Gastrocnemius medialis (tissue), 4 donors: ENCODE measurements at regions of chr13 and their contacts with region 1.

Region 1: DNA sequence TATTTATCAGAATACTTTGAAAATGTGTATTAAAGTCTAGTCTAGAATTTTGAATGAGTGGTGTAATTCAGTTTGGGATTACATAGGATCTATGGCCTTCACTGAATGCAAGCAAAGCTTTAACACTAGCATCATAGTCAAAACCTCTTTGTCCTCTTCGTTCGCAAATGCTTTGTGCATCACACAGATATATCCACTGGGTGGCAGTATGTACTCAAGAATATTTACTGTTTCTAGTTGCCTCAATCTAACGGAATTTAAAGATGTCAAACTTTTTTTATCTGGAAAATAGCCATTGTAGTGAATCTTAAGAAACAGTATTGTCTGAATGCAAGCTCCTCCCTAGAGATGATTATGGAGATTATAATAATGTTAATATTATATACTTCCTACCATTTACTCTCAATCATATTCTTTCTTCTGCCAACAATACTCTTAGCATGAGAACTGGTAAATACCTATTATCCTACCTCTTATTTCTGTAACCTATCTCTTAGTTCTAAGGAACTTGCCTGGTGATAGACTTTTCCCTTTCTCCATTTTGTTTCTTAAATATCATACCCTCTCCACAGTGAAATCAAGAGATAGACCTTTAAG is 25.8 kb downstream of the LACC1 start:
- DNase-seq: no peak
- ATAC-seq: peak; percentile 61 to 77
- H3K4me3 ChIP-seq: no peak overlapping the region
- H3K27ac ChIP-seq: no peak overlapping the region
- H3K4me1 ChIP-seq: peaks cover 0 to 4% of the 10 kb centered on the region in 2 donors
- H3K27me3 ChIP-seq: no peaks in the 10 kb centered on the region
- CTCF ChIP-seq: peak; percentile 66 to 84 (median 76)
- POLR2A ChIP-seq: no peak

Region 2: GRCh38 chr13:43852923-43853404 is 52.6 kb before region 1 on chr13:
- in situ Hi-C with region 1: no loop called
- intact Hi-C with region 1: no loop called
- DNase-seq: no peak
- ATAC-seq: no peak
- H3K4me3 ChIP-seq: no peak overlapping the region
- H3K27ac ChIP-seq: no peak overlapping the region
- H3K4me1 ChIP-seq: no peaks in the 10 kb centered on the region
- H3K27me3 ChIP-seq: no peaks in the 10 kb centered on the region
- CTCF ChIP-seq: no peak
- POLR2A ChIP-seq: no peak

Region 3: DNA sequence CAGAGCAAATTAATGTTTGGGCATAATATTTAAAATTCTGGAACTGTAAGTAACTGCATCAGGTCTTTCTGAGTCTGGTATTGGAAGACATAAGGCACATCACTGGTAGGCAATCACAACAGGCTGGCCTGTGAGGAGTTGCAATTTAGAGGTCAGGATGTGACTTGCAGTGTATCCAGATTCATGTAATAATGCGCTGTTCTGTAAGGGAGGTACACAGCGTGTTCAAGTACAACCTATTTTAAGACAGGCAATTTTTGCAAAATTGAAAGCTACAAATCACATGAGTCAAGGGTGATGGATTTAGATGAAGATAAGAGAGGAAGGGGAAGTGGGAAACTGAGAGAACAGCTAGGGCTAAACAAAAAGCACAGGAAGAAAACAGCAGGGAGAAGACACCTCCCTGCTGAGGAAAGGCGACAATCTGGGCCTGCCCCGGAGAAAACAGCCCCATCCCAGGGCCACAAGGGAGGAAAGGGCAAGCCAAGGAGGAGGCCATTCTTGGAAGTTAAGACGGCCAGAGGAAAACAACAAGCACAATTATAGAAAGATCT is 112.3 kb after region 1 on chr13:
- in situ Hi-C with region 1: no loop called
- intact Hi-C with region 1: no loop called
- DNase-seq: no peak
- ATAC-seq: no peak
- H3K4me3 ChIP-seq: no peak overlapping the region
- H3K27ac ChIP-seq: peak overlapping the region in 1 of 4 donors; percentile 6
- H3K4me1 ChIP-seq: peaks cover 17 to 31% of the 10 kb centered on the region in 2 donors
- H3K27me3 ChIP-seq: no peaks in the 10 kb centered on the region
- CTCF ChIP-seq: no peak
- POLR2A ChIP-seq: no peak

Region 4: DNA sequence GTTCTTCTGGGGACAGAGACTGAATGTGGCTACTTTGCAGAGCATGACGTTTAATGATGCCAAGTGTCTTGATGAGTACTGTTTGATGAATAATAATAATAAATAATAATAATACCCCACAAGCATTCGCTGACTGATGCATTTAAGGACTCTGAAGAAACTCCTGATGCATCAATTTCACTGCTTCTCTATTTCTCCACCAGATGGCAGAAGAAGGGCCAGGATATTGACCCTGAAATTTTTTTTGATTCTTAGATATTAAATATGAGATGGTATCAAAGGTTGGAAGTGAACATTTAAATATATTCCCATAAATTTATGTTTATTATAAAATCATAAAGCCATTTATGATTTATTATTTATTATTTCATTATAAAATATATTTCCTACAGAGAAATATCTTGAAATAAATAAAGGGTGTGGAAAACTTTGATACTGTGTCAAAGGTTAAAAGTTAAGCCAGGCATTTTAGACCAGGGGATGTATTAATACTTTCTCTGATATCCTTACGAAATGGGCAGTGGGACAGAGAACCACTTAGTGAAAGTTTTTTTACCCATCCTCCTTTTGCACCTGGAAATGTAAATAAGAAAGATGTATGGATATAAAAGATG is 145.0 kb after region 1 on chr13:
- in situ Hi-C with region 1: loop called in 3 of 4 experiments (anchors 5 to 25 kb)
- intact Hi-C with region 1: loop called (anchors 5 kb)
- DNase-seq: no peak
- ATAC-seq: peak; percentile 58 to 70
- H3K4me3 ChIP-seq: no peak overlapping the region
- H3K27ac ChIP-seq: no peak overlapping the region
- H3K4me1 ChIP-seq: peaks cover 0 to 4% of the 10 kb centered on the region in 2 donors
- H3K27me3 ChIP-seq: no peaks in the 10 kb centered on the region
- CTCF ChIP-seq: peak; percentile 62 to 87 (median 73)
- POLR2A ChIP-seq: no peak

Region 5: GRCh38 chr13:44116562-44117332 is 211.2 kb after region 1 on chr13:
- in situ Hi-C with region 1: no loop called
- intact Hi-C with region 1: loop called (anchors 5 kb)
- DNase-seq: no peak
- ATAC-seq: peak; percentile 72 to 88
- H3K4me3 ChIP-seq: peak overlapping the region in 1 of 4 donors; percentile 12
- H3K27ac ChIP-seq: peak overlapping the region; percentile 37 to 72 (median 66)
- H3K4me1 ChIP-seq: peaks cover 20 to 23% of the 10 kb centered on the region in 2 donors
- H3K27me3 ChIP-seq: no peaks in the 10 kb centered on the region
- CTCF ChIP-seq: peak in 1 of 5 experiments; percentile 25
- POLR2A ChIP-seq: no peak

Region 6: GRCh38 chr13:44435142-44435982 is 529.8 kb after region 1 on chr13:
- in situ Hi-C with region 1: loop called (anchors 5 to 25 kb)
- intact Hi-C with region 1: loop called (anchors 2 kb)
- DNase-seq: peak; percentile 94 to 96
- ATAC-seq: peak; percentile 75 to 78
- H3K4me3 ChIP-seq: peak overlapping the region; percentile 79 to 85 (median 82)
- H3K27ac ChIP-seq: peak overlapping the region; percentile 87 to 95 (median 92)
- H3K4me1 ChIP-seq: peaks cover 28 to 47% of the 10 kb centered on the region in 2 donors
- H3K27me3 ChIP-seq: no peaks in the 10 kb centered on the region
- CTCF ChIP-seq: no peak
- POLR2A ChIP-seq: peak; percentile 76 to 93

Region 7: DNA sequence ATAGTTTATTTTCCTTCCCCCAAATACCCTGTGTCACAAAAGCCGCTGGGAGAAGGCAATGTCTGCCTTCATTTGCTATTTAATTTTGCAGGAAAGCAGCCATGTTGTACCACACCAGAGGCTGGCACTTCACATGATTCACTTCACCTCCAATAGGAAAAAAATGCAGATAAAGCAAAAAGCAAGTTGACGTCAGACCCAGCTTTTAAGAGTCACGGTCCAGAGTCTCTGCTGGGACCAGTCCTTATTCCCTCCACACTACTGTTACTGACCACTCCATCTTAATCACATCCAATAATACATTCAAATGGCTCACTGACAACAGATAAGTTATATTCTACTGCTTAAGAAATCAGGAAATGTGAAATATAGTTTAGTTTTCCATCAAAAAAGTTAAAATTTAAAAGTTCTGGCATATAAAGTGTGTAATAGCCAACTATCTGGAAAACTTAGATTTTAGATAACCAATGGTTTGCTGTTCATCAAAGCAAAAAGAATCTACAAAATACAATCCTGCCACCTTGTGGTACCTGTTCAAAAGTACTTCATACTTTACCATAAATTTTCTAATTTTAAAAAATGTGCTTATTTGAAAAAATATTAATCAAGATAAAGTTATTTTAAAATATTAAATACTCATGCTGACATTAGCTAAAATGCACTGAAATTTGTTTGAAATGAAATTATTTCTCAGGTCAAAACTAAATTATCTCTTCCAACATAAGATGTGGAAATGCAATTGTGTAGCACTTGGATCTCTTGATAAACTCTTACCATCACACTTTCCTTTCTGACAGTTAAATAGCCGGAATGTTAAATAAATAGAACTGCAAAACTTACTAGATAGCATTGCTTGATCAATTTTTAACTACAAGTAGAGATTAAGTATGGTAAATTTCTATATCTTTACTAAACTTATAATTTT is 565.4 kb after region 1 on chr13:
- in situ Hi-C with region 1: loop called in 2 of 4 experiments (anchors 10 kb)
- intact Hi-C with region 1: loop called (anchors 1 kb)
- DNase-seq: no peak
- ATAC-seq: no peak
- H3K4me3 ChIP-seq: no peak overlapping the region
- H3K27ac ChIP-seq: no peak overlapping the region
- H3K4me1 ChIP-seq: peaks cover 48 to 72% of the 10 kb centered on the region in 2 donors
- H3K27me3 ChIP-seq: no peaks in the 10 kb centered on the region
- CTCF ChIP-seq: peak; percentile 43 to 63 (median 55)
- POLR2A ChIP-seq: no peak

Region 8: GRCh38 chr13:44969551-44970484 is 1064.3 kb after region 1 on chr13:
- in situ Hi-C with region 1: loop called (anchors 10 to 25 kb)
- intact Hi-C with region 1: loop called (anchors 5 kb)
- DNase-seq: no peak
- ATAC-seq: peak; percentile 64 to 69
- H3K4me3 ChIP-seq: no peak overlapping the region
- H3K27ac ChIP-seq: peak overlapping the region; percentile 60 to 81 (median 79)
- H3K4me1 ChIP-seq: peaks cover 37 to 51% of the 10 kb centered on the region in 2 donors
- H3K27me3 ChIP-seq: no peaks in the 10 kb centered on the region
- CTCF ChIP-seq: peak; percentile 78 to 92 (median 82)
- POLR2A ChIP-seq: no peak

Region 9: GRCh38 chr13:45280751-45281634 is 1375.5 kb after region 1 on chr13:
- in situ Hi-C with region 1: no loop called
- intact Hi-C with region 1: loop called (anchors 10 kb)
- DNase-seq: peak; percentile 55 to 77
- ATAC-seq: peak; percentile 93 to 99
- H3K4me3 ChIP-seq: no peak overlapping the region
- H3K27ac ChIP-seq: peak overlapping the region in 3 of 4 donors; percentile 3 to 41 (median 6)
- H3K4me1 ChIP-seq: peaks cover 0 to 12% of the 10 kb centered on the region in 2 donors
- H3K27me3 ChIP-seq: no peaks in the 10 kb centered on the region
- CTCF ChIP-seq: peak; percentile 57 to 77 (median 73)
- POLR2A ChIP-seq: no peak